PC-9 (cell line): ENCODE measurements at regions of chr12 and their contacts with region 1.

Region 1: DNA sequence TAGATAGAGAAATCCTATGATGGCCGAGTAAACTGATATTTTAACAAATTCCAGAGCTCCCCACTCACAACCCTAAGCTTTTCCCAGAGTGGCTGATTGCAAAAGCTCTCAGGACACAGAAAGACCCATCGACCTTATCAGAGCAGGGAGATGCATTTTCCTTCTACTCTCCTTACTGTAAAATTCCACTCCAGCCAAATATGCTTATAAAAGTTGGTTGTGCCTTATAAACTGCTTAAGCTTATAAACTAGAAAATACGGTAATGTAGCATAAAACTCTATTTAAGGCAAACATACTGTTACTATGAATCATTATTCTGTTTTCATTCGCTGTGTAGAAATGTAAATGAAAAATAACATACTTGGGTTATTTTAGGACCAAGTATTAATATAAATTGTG is 41.6 kb upstream of the TRHDE start:
- DNase-seq: no peak
- H3K4me3 ChIP-seq: no peak overlapping the region
- H3K27ac ChIP-seq: no peak overlapping the region
- H3K4me1 ChIP-seq: no peaks in the 10 kb centered on the region
- H3K27me3 ChIP-seq: no peaks in the 10 kb centered on the region
- CTCF ChIP-seq: no peak

Region 2: DNA sequence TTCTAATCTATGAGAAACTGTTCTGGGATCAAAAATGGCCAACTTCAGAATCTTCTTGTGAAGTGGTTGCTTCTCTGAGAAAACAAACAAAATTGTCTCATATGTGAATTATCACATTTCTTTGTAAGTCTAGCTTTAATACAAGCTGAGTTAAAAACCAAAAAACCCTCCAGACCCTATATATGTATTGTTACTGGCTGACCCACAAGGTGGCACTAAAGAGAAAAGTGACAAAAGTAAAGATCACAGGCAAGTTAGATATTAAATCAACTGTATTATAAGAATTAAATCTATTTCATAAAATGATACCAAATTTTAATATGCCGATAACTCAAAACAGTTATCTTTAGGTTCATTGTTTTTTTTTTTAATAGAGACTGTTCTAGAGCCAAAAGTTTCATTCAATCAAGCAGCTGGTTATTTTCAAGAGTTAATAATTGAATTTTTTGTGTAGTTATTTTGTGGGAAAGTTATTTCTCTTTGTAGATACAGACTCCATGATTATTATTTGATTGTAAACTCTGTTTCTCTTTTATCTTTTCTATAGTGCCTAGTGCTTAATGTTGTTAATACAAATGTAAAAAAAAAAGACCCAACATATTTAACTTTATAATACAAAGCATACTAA is 34.1 kb after region 1 on chr12:
- CTCF ChIA-PET with region 1: no interaction called
- POLR2A ChIA-PET with region 1: interaction called, 13 read pairs
- intact Hi-C with region 1: no loop called
- DNase-seq: no peak
- H3K4me3 ChIP-seq: no peak overlapping the region
- H3K27ac ChIP-seq: no peak overlapping the region
- H3K4me1 ChIP-seq: no peaks in the 10 kb centered on the region
- H3K27me3 ChIP-seq: no peaks in the 10 kb centered on the region
- CTCF ChIP-seq: peak; percentile 69

Region 3: DNA sequence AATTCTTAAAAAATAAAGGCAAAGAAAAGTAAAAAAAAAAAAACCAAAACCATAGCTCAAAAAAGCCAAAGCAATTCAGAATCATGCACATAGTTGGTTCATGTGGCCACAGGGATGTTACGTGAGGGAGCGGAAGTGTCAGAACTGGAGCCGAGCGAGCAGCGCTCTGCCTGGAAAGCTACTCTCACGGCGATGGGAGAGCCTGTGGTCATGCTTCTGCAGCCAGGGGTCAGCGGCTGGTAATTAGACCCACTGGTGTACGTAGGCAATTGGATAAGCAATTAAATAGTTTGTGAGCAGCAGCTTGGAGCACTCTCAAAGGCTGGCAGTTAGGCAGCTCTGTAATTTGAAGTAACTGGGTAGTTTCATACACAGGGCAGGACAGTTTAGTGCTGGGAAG is 99.7 kb after region 1 on chr12:
- CTCF ChIA-PET with region 1: no interaction called
- POLR2A ChIA-PET with region 1: no interaction called
- intact Hi-C with region 1: no loop called
- DNase-seq: no peak
- H3K4me3 ChIP-seq: no peak overlapping the region
- H3K27ac ChIP-seq: no peak overlapping the region
- H3K4me1 ChIP-seq: no peaks in the 10 kb centered on the region
- H3K27me3 ChIP-seq: no peaks in the 10 kb centered on the region
- CTCF ChIP-seq: no peak